CD4-positive, alpha-beta T cell (primary cell): ENCODE measurements at regions of chr9 and their contacts with region 1.

Region 1: GRCh38 chr9:132406554-132407122 is at the start of gene TTF1:
- DNase-seq: peak; percentile 86 to 97 (median 94)
- ATAC-seq: peak; percentile 76
- H3K4me3 ChIP-seq: peak within 1 kb of the TSS; percentile 72
- H3K4me3 Mint-ChIP-seq: peak within 1 kb of the TSS; percentile 89
- H3K27ac ChIP-seq: peak within 1 kb of the TSS; percentile 48 to 60
- H3K27ac Mint-ChIP-seq: peak within 1 kb of the TSS; percentile 83
- H3K4me1 ChIP-seq: peaks cover 59% of the 10 kb centered on the region
- H3K4me1 Mint-ChIP-seq: peaks cover 63% of the 10 kb centered on the region
- H3K27me3 ChIP-seq: peaks cover 12 to 13% of the 10 kb centered on the region in 2 experiments
- H3K27me3 Mint-ChIP-seq: peaks cover 16% of the 10 kb centered on the region
- CTCF ChIP-seq: no peak
- total RNA-seq, gene TTF1: 12.4 to 12.8 TPM

Region 2: DNA sequence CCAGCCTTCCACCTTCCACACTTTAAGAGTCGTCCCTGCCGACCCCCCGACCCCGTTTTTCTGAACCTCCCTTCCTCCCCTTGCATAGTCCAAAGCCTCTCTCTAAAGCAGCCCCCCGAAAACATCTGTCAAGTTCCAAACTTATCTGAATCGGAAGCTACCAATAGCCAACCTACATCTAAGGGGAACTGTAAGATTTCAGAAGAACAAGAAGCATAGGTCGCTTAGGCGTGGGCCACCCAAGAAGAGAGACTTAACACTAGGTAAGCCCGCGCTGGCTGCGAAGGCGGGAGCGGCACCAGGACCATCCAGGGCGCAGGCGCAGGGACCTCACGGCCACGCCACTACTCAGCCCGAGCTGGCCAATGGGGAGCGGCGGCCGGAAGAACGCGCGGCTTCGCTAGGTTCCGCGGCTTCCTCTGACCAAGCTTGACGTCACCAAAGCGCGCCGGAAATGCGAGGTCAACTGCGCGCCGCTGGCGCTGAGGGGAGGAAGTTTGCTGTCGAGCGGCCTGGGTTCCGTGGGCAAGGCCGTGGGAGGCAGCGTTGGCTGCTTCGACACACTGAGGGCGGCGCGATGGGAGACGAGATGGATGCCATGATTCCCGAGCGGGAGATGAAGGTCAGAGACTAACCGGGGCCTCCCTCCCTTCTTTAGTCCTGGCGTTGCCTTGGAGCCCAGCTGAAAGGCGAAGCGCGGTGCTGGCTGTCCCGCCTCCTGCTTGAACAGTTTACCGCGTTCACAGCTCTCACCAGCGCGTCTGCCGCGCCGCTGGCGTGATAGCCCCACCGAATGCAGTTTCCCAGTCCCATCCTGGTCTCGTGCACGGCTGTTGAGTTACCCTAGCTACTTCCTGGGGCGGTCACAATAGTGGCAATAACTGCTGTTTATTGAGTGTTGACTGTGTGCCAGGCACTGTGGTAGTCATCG is 1281.2 kb before region 1 on chr9 and contains the start of gene NUP214:
- CTCF ChIA-PET with region 1: no interaction called
- POLR2A ChIA-PET with region 1: no interaction called
- intact Hi-C with region 1: loop called in 1 of 2 experiments (anchors 10 kb)
- DNase-seq: peak; percentile 97 to 100 (median 99)
- ATAC-seq: peak; percentile 97
- H3K4me3 ChIP-seq: peak within 1 kb of the TSS; percentile 76
- H3K4me3 Mint-ChIP-seq: peak within 1 kb of the TSS; percentile 96
- H3K27ac ChIP-seq: peak within 1 kb of the TSS; percentile 78 to 87
- H3K27ac Mint-ChIP-seq: peak within 1 kb of the TSS; percentile 92
- H3K4me1 ChIP-seq: peaks cover 24% of the 10 kb centered on the region
- H3K4me1 Mint-ChIP-seq: peaks cover 37% of the 10 kb centered on the region
- H3K27me3 ChIP-seq: no peaks in the 10 kb centered on the region
- H3K27me3 Mint-ChIP-seq: no peaks in the 10 kb centered on the region
- CTCF ChIP-seq: no peak
- total RNA-seq, gene NUP214: 105 to 107 TPM

Region 3: GRCh38 chr9:132354637-132355355 is 51.8 kb before region 1 on chr9 and contains the start of gene SETX:
- CTCF ChIA-PET with region 1: no interaction called
- POLR2A ChIA-PET with region 1: interaction called, 6 read pairs
- intact Hi-C with region 1: loop called (anchors 1 to 2 kb)
- DNase-seq: peak; percentile 88 to 99 (median 96)
- ATAC-seq: peak; percentile 82
- H3K4me3 ChIP-seq: peak within 1 kb of the TSS; percentile 74
- H3K4me3 Mint-ChIP-seq: peak within 1 kb of the TSS; percentile 94
- H3K27ac ChIP-seq: peak within 1 kb of the TSS; percentile 91 to 96
- H3K27ac Mint-ChIP-seq: peak within 1 kb of the TSS; percentile 91
- H3K4me1 ChIP-seq: peaks cover 41% of the 10 kb centered on the region
- H3K4me1 Mint-ChIP-seq: peaks cover 47% of the 10 kb centered on the region
- H3K27me3 ChIP-seq: no peaks in the 10 kb centered on the region
- H3K27me3 Mint-ChIP-seq: no peaks in the 10 kb centered on the region
- CTCF ChIP-seq: no peak
- total RNA-seq, gene SETX: 36.1 to 37.7 TPM

Region 4: DNA sequence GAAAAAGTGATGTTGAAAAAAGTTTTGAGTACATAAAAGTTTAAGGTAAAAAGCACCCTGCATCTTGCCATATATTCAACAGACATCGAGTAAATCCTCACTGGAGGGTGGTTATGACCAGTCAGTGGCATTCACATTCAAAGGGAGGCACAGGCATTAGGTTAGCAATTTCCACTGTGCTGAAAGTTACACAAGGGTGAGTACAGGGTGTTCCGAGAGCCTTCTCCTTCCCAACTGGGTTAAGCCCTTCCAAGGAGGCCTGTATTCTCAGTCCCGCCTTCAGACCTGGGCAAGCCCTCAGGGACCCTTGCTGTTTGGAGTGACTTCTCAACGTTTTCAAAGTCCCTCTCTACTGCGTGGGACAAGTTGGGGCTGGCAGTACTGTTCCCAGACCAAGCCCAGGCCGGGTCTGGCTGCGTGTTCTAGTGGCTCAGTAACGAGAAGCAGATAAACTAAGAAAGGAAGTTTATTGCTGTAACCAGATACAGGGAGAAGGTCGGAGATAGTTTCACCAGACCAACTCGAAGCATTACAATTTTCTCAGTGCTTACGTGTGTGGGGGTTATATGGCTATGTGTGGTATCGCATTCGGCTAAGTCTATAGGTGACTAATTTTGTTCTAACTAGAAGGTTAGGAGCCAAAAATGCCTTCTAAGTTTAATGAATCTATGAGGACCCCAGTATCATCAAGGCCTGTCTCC is 38.9 kb before region 1 on chr9:
- CTCF ChIA-PET with region 1: no interaction called
- POLR2A ChIA-PET with region 1: no interaction called
- intact Hi-C with region 1: no loop called
- DNase-seq: no peak
- ATAC-seq: no peak
- H3K4me3 ChIP-seq: no peak overlapping the region
- H3K4me3 Mint-ChIP-seq: no peak overlapping the region
- H3K27ac ChIP-seq: no peak overlapping the region
- H3K27ac Mint-ChIP-seq: no peak overlapping the region
- H3K4me1 ChIP-seq: peaks cover 4% of the 10 kb centered on the region
- H3K4me1 Mint-ChIP-seq: peaks cover 8% of the 10 kb centered on the region
- H3K27me3 ChIP-seq: no peaks in the 10 kb centered on the region
- H3K27me3 Mint-ChIP-seq: no peaks in the 10 kb centered on the region
- CTCF ChIP-seq: no peak

Region 5: DNA sequence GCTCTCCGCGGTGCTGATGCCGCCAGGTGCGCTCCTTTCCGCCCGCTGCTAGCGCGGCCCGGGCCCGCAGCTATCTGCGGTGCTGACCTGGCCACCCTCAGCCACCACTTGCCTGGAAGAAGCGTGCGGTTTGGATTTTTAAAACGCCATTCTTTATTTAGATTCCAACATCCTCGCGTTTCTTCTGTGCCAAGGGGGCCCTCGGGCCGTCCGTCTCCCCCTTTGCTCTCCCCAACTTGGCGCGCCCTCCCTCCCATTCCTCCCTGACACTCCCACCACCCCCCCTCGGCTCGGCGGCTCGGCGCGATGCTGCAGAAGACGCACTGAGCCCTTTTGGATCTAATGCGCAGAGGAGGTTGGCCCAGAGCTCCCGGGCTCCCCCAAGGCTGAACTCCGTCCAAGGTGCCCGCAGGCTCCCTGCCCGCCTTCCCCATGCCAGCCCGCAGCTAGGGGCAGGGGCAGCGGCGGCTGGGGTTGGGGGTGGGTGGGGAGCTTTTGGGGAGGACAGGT is 175.7 kb after region 1 on chr9 and contains the start of gene BARHL1:
- CTCF ChIA-PET with region 1: no interaction called
- POLR2A ChIA-PET with region 1: no interaction called
- intact Hi-C with region 1: loop called (anchors 2 kb)
- DNase-seq: no peak
- ATAC-seq: no peak
- H3K4me3 ChIP-seq: peak within 1 kb of the TSS; percentile 22
- H3K4me3 Mint-ChIP-seq: peak within 1 kb of the TSS; percentile 82
- H3K27ac ChIP-seq: no peak within 1 kb of the TSS
- H3K27ac Mint-ChIP-seq: peak within 1 kb of the TSS; percentile 66
- H3K4me1 ChIP-seq: peaks cover 18% of the 10 kb centered on the region
- H3K4me1 Mint-ChIP-seq: peaks cover 12% of the 10 kb centered on the region
- H3K27me3 ChIP-seq: peaks cover 86 to 92% of the 10 kb centered on the region in 2 experiments
- H3K27me3 Mint-ChIP-seq: peaks cover 83% of the 10 kb centered on the region
- CTCF ChIP-seq: no peak
- total RNA-seq, gene BARHL1: not detected

Region 6: GRCh38 chr9:132901856-132902831 is 495.5 kb after region 1 on chr9:
- CTCF ChIA-PET with region 1: no interaction called
- POLR2A ChIA-PET with region 1: no interaction called
- intact Hi-C with region 1: loop called in 1 of 2 experiments (anchors 10 kb)
- DNase-seq: peak; percentile 58 to 91 (median 76)
- ATAC-seq: peak; percentile 99
- H3K4me3 ChIP-seq: no peak overlapping the region
- H3K4me3 Mint-ChIP-seq: no peak overlapping the region
- H3K27ac ChIP-seq: no peak overlapping the region
- H3K27ac Mint-ChIP-seq: peak overlapping the region; percentile 70
- H3K4me1 ChIP-seq: no peaks in the 10 kb centered on the region
- H3K4me1 Mint-ChIP-seq: peaks cover 5% of the 10 kb centered on the region
- H3K27me3 ChIP-seq: no peaks in the 10 kb centered on the region
- H3K27me3 Mint-ChIP-seq: no peaks in the 10 kb centered on the region
- CTCF ChIP-seq: peak; percentile 97

Region 7: GRCh38 chr9:133347985-133348717 is 941.5 kb after region 1 on chr9 and contains the starts of genes MED22 and RPL7A:
- CTCF ChIA-PET with region 1: no interaction called
- POLR2A ChIA-PET with region 1: no interaction called
- intact Hi-C with region 1: loop called in 1 of 2 experiments (anchors 10 kb)
- DNase-seq: peak; percentile 83 to 97 (median 88)
- ATAC-seq: peak; percentile 90
- H3K4me3 ChIP-seq: peak within 1 kb of the TSS; percentile 88
- H3K4me3 Mint-ChIP-seq: peak within 1 kb of the TSS; percentile 96
- H3K27ac ChIP-seq: peak within 1 kb of the TSS; percentile 84 to 91
- H3K27ac Mint-ChIP-seq: peak within 1 kb of the TSS; percentile 85
- H3K4me1 ChIP-seq: peaks cover 50% of the 10 kb centered on the region
- H3K4me1 Mint-ChIP-seq: peaks cover 39% of the 10 kb centered on the region
- H3K27me3 ChIP-seq: no peaks in the 10 kb centered on the region
- H3K27me3 Mint-ChIP-seq: no peaks in the 10 kb centered on the region
- CTCF ChIP-seq: no peak
- total RNA-seq, gene MED22: 15.7 to 18.0 TPM
- total RNA-seq, gene RPL7A: 2,613 to 2,686 TPM